RWPE1 (cell line): ENCODE measurements at regions of chr10 and their contacts with region 1.

Region 1: GRCh38 chr10:101141616-101142532 is 10.8 kb downstream of the TLX1 start:
- DNase-seq: peak; percentile 92
- H3K27ac ChIP-seq: no peak overlapping the region
- CTCF ChIP-seq: peak; percentile 97

Region 2: GRCh38 chr10:99966306-99966705 is 1175.6 kb before region 1 on chr10:
- CTCF ChIA-PET with region 1: no interaction called
- POLR2A ChIA-PET with region 1: no interaction called
- DNase-seq: peak; percentile 86
- H3K27ac ChIP-seq: peak overlapping the region; percentile 74
- CTCF ChIP-seq: no peak

Region 3: DNA sequence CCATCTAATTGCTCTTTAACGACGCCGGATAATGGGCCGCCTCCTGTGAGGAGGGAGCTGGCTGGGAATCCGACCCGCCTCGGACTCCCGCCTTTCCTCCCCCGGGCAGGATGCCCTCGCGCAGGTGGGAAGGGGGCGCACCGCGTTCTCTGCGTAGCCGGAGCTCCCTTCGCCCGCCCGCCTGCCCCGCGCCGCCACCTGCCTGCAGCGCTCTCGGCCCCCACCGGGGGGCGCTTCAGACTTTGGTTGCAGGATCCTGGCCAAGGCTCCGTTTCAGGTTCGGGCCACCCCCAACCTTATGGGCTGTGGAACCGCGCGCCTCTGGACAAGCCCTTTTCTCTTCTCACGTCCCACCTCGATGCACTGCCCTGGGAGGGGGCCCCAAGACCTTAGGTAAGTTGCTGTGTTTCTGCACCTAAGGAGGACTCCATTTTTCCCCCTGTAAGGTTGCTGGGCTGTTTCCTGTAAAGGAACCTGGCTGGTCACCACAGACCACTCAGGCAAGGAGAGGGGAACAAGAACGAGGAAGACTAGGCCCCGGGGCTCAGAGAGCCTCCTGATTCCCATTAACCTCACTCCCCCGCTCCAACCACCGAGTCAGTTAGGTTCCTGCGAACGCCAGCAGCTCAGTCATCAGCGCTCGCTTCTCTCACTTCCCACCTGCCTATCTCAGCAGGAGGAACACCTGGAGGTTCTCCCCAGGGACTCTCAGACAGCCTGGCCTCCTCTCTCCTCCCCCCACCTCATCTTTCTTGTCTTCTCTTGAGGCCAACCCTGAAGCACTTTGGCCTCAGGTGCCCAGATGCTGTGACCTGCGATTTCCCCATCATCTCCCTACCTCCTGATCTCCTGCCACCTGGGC is 91.4 kb before region 1 on chr10:
- CTCF ChIA-PET with region 1: interaction called, 17 read pairs
- POLR2A ChIA-PET with region 1: no interaction called
- DNase-seq: peak; percentile 70
- H3K27ac ChIP-seq: no peak overlapping the region
- CTCF ChIP-seq: peak; percentile 92

Region 4: GRCh38 chr10:101067356-101068083 is 74.4 kb before region 1 on chr10:
- CTCF ChIA-PET with region 1: interaction called, 19 read pairs
- POLR2A ChIA-PET with region 1: no interaction called
- DNase-seq: peak; percentile 74
- H3K27ac ChIP-seq: peak overlapping the region; percentile 94
- CTCF ChIP-seq: peak; percentile 87

Region 5: GRCh38 chr10:101095542-101096213 is 46.2 kb before region 1 on chr10:
- CTCF ChIA-PET with region 1: interaction called, 272 read pairs
- POLR2A ChIA-PET with region 1: interaction called, 6 read pairs
- DNase-seq: peak; percentile 91
- H3K27ac ChIP-seq: no peak overlapping the region
- CTCF ChIP-seq: peak; percentile 79

Region 6: DNA sequence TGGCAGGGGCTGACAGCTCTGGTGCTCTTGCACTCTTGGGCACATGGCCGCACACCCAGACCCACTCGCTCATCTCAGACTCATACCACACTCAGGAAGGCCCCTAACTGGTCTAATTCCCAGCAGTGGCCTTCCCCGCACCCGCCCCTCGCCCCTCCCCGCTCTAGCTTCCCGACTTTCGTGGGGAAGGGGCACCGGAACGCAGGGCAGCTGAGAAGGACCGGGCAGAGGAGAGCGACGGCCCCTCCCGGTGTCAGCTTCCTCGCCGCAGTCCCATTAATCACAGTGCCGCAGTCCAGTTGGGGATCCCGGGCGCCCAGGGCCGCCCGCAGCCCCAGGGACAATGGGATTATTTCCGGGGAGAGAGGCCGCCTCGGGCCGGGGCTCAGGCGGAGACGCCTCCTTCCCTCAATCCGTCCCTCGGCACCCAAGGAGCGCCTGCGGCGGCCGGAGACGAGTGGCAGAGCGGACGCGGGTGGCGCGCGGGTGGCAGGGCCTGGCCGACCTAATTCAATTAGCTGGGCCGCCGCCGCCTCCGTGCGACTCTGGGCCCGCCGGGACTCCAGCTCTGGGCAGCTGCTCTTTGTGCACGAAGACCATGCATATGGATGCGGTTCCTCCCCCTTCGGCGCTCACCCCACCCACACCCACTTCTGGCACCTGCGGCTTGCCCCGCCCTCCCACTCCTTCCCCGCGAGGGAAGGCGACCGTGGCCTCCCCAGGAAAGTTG is 18.6 kb before region 1 on chr10:
- CTCF ChIA-PET with region 1: interaction called, 17 read pairs
- POLR2A ChIA-PET with region 1: no interaction called
- DNase-seq: no peak
- H3K27ac ChIP-seq: no peak overlapping the region
- CTCF ChIP-seq: no peak

Region 7: DNA sequence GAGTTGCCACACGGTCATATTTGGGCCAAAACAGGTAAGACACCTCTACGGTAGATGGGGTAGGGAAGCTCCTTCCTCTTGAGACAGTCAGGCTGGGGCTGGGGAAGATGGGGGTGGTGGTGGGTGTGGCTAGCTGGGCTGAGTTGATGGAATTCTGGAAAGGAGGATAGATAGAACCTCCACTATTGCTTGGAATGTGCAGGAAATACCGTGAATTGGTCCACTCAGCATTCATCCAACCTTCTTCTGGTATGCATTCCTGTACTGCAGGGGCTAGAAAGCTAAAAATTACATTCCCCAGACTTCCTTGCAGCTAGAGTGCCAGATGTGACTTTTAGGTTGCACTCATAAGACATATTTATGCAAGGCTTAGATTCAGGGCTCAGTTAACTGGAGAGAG is 14.0 kb after region 1 on chr10:
- CTCF ChIA-PET with region 1: interaction called, 20 read pairs
- POLR2A ChIA-PET with region 1: no interaction called
- DNase-seq: no peak
- H3K27ac ChIP-seq: no peak overlapping the region
- CTCF ChIP-seq: no peak

Region 8: DNA sequence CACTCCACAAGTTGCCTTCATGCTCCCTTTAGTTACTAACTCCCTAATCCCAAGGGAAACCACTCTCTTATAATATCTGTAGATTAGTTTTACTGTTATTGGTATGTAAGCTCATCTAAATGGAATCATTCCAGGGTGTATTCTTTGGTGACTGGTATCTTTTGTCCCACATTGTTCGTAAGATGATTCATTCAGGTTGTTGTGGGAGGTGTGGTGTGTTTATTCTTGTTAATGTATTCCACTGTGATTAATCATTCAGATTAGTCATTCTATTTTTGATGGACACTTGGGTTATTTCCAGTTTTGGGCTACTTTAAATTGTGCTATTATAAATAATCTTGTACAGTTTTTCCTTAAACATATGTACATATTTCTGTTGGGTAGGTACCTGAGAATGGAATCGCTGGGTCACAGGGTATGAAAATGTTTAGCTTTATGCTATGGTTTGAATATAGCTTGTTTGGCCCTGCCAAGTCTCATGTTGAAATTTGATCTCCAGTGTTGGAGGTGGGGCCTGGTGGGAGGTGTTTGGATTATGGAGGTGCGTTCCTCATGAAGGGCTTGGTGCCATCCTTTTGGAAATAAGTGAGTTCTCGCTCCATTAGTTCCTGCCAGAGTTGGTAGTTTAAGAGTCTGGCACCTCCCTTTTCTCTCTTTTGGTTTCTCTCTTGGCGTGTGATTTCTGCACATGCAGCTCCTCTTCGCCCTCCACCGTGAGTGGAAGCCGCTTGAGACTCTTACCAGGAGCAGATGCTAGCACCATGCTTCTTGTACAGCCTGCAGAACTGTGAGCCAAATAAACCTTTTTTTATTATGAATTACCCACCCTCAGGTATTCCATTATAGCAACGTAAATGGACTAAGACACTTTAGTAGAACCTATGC is 225.9 kb after region 1 on chr10:
- CTCF ChIA-PET with region 1: no interaction called
- POLR2A ChIA-PET with region 1: no interaction called
- DNase-seq: peak; percentile 98
- H3K27ac ChIP-seq: peak overlapping the region; percentile 84
- CTCF ChIP-seq: no peak

Region 9: DNA sequence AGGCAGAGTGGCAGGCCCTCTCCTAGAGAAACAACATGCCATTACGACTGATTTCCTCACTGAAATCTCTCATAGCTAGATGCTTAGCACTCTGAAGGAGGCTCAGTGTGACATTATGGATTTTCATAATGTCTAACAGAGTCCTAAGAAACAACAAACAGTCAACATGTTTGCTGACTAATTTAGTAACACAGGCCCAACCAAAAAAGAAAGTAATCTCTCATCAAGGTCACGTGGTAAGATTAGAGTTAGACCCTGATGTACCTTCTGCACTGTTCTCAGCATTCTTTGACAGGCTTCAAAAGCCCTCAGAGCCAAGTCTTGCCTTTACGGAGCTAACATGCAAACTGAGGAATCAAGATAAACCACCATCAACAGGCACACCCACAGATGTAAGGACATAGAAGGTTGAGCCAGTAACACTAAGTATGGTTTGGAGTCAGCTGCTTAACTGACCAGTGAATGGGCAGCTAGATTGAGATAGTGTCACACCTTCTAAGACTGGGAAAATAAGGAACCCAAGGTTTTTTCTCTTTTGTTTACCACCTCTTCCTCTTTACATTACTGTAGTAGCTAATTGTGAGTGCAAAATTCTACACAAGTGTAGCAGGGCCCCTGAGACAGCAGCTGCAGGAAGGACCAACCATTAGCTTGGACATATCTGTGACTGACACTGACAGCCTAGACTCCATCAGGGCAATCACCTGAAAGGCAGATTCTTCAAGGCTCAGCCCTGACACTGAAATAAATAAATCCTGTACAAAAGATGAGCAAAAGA is 717.0 kb after region 1 on chr10:
- CTCF ChIA-PET with region 1: no interaction called
- POLR2A ChIA-PET with region 1: no interaction called
- DNase-seq: no peak
- H3K27ac ChIP-seq: no peak overlapping the region
- CTCF ChIP-seq: no peak